Activated B cell treated with CpG ODN at 0.5 μM for 24 hours (primary cell): ENCODE measurements at regions of chr3 and their contacts with region 1.

Region 1: GRCh38 chr3:43998836-43999727 is 242.6 kb upstream of the TOPAZ1 start:
- DNase-seq: peak; percentile 48
- ATAC-seq: peak; percentile 45
- H3K4me3 Mint-ChIP-seq: peak overlapping the region; percentile 89
- H3K27ac Mint-ChIP-seq: peak overlapping the region; percentile 66
- H3K4me1 Mint-ChIP-seq: peaks cover 46% of the 10 kb centered on the region
- H3K27me3 Mint-ChIP-seq: peaks cover 51% of the 10 kb centered on the region
- CTCF ChIP-seq: no peak

Region 2: DNA sequence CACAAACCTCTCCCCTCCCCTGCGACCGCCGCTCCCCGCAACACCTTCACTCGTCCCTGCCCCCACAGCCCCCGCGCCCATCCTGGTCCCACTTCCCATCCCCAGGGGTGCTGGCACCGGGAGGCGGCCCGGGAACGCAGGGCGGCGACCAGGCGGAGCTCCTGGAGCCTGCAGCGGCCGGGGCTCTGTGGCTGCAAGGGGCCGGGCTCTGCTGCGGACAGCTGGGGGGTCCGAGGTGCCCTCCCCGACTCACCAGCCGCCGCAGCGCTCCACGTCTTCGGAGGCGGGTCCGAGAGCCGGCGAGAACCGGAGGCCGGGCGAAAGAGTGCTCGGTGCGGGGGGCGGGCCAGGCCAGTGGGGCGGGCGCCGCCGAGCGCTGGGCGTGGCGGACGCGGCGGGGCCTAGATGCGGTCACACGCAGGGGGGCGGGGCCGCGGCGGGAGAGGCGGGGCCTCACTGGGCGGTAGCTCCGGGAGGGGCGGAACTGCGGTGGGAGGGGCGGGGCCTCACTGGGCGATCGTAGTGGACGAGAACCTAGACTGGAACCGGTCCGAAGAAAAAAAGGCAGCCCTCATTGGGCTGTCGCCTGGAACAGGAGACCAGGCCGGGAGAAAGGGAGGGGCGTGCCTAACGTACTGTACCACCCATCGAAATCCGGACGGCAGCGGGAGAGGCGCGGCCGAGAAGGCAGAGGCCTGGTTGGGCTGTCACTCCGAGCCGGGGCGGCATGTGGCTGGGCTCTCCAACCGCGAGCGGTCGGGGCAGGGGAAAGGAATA is 377.2 kb before region 1 on chr3 and contains the start of gene ANO10:
- CTCF ChIA-PET with region 1: no interaction called
- POLR2A ChIA-PET with region 1: no interaction called
- intact Hi-C with region 1: loop called (anchors 5 kb)
- DNase-seq: peak; percentile 98
- ATAC-seq: peak; percentile 91
- H3K4me3 Mint-ChIP-seq: peak within 1 kb of the TSS; percentile 88
- H3K27ac Mint-ChIP-seq: peak within 1 kb of the TSS; percentile 77
- H3K4me1 Mint-ChIP-seq: peaks cover 13% of the 10 kb centered on the region
- H3K27me3 Mint-ChIP-seq: peaks cover 1% of the 10 kb centered on the region
- CTCF ChIP-seq: no peak
- total RNA-seq, gene ANO10: 6.4 and 8.1 TPM in 2 replicates

Region 3: GRCh38 chr3:43894176-43895049 is 104.7 kb before region 1 on chr3:
- CTCF ChIA-PET with region 1: interaction called, 4 read pairs
- POLR2A ChIA-PET with region 1: no interaction called
- intact Hi-C with region 1: loop called (anchors 1 kb)
- DNase-seq: peak; percentile 43
- ATAC-seq: peak; percentile 63
- H3K4me3 Mint-ChIP-seq: peak overlapping the region; percentile 83
- H3K27ac Mint-ChIP-seq: peak overlapping the region; percentile 56
- H3K4me1 Mint-ChIP-seq: peaks cover 33% of the 10 kb centered on the region
- H3K27me3 Mint-ChIP-seq: peaks cover 17% of the 10 kb centered on the region
- CTCF ChIP-seq: no peak

Region 4: DNA sequence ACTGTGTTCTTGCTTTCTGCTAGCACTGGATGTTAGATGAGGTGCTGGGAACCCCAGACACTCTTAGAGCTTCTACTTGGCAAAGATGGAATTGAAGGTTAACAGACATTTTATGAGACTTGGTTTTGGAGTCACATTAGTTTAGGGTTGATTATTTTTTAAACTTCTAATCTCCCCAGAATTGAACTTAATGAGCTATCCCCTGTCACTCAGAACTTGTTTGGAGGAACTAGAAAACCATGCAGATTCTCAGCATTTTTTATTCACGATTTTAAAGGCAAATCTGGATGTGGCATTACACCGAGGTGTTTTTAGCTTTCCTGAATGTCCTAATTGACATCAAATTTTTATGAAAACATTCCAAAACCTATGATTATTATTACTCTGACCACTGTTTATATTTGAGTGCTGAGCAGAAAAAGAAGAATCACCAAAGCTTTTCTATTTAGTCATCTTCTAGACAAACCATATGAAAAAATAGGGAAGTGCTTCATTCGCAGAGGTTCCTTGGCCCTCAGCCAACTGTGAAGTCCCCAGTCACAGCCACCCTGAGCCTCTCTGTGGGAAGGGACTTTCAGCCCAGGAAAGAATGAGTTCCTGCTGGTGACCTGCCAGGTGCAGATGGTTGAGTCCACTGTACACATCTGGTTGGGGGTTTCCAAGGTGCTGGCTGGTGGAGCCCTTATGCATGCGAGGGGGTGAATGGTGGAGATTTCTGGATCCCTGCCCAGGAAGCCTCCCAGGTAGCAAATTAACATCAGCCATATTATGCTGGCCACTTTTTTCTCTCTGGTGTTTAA is 46.6 kb after region 1 on chr3:
- CTCF ChIA-PET with region 1: interaction called, 3 read pairs
- POLR2A ChIA-PET with region 1: interaction called, 4 read pairs
- intact Hi-C with region 1: loop called (anchors 1 kb)
- DNase-seq: peak; percentile 66
- ATAC-seq: peak; percentile 95
- H3K4me3 Mint-ChIP-seq: peak overlapping the region; percentile 7
- H3K27ac Mint-ChIP-seq: peak overlapping the region; percentile 84
- H3K4me1 Mint-ChIP-seq: peaks cover 70% of the 10 kb centered on the region
- H3K27me3 Mint-ChIP-seq: no peaks in the 10 kb centered on the region
- CTCF ChIP-seq: no peak

Region 5: DNA sequence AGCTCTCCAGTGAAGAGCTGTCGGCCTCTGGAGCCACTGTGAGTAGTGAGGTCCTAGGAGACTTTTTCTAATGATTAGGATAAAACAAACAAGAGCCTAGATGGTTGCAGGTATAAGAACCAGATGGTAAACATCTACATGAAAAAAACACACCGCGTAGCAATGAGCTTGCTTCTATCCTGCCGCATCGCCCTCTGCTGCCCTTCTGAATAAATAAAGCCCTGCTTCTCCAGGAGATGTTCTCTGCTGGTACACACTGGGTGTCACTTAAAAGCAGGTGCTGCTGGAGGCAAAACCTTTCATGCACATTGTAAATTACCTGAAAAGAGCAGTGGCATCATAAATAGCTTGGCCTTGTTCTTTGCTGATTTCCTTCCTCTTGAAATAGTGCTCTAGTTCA is 78.2 kb after region 1 on chr3:
- CTCF ChIA-PET with region 1: interaction called, 3 read pairs
- POLR2A ChIA-PET with region 1: interaction called, 5 read pairs
- intact Hi-C with region 1: loop called (anchors 1 kb)
- DNase-seq: no peak
- ATAC-seq: no peak
- H3K4me3 Mint-ChIP-seq: no peak overlapping the region
- H3K27ac Mint-ChIP-seq: no peak overlapping the region
- H3K4me1 Mint-ChIP-seq: peaks cover 3% of the 10 kb centered on the region
- H3K27me3 Mint-ChIP-seq: no peaks in the 10 kb centered on the region
- CTCF ChIP-seq: no peak

Region 6: GRCh38 chr3:44198284-44199269 is 199.5 kb after region 1 on chr3:
- CTCF ChIA-PET with region 1: interaction called, 8 read pairs
- POLR2A ChIA-PET with region 1: no interaction called
- intact Hi-C with region 1: loop called (anchors 1 kb)
- DNase-seq: peak; percentile 29
- ATAC-seq: peak; percentile 71
- H3K4me3 Mint-ChIP-seq: no peak overlapping the region
- H3K27ac Mint-ChIP-seq: no peak overlapping the region
- H3K4me1 Mint-ChIP-seq: no peaks in the 10 kb centered on the region
- H3K27me3 Mint-ChIP-seq: peaks cover 10% of the 10 kb centered on the region
- CTCF ChIP-seq: peak; percentile 67